ENCODE measurements at regions of chr21 and their contacts with region 1.

Region 1: DNA sequence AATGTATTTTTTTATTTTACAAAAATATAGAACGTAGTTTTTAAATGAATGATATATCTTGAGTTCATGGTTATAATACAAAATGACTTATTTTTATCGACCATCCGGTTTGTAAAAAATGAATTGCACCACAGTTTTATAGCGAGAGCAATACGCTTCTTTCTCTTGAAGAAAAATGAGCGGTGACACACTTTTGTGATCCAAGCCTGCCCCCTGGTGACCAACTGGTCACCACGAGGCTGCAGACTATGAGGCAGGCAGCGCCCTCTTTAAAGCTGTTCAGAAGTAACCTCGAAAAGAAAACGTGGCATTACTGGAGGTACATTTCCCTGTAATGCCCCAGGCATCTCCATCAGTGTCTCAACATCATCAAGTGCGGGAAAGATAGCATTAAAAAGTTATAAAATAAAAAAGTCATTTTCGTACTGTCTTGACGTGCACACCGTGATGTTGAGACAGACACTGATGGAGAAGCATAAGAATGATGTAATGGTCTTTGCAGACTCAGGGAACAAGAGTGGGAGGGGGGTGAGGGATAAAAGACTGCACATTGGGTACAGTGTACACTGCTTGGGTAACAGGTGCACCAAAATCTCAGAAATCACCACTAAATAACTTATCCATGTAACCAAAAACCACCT is 734.2 kb upstream of the ADAMTS5 start:
- DNase-seq: peak; percentile 86
- ATAC-seq: peak; percentile 94

Region 2: GRCh38 chr21:26769613-26770188 is 931.4 kb before region 1 on chr21:
- intact Hi-C with region 1: loop called (anchors 10 kb)
- DNase-seq: no peak
- ATAC-seq: no peak

Region 3: GRCh38 chr21:26850108-26850643 is 850.9 kb before region 1 on chr21:
- intact Hi-C with region 1: loop called (anchors 2 kb)
- DNase-seq: no peak
- ATAC-seq: no peak

Region 4: GRCh38 chr21:28336314-28336713 is 635.2 kb after region 1 on chr21:
- intact Hi-C with region 1: loop called (anchors 5 kb)
- DNase-seq: no peak
- ATAC-seq: peak; percentile 75